ENCODE measurements at regions of chr6 and their contacts with region 1.

Region 1: DNA sequence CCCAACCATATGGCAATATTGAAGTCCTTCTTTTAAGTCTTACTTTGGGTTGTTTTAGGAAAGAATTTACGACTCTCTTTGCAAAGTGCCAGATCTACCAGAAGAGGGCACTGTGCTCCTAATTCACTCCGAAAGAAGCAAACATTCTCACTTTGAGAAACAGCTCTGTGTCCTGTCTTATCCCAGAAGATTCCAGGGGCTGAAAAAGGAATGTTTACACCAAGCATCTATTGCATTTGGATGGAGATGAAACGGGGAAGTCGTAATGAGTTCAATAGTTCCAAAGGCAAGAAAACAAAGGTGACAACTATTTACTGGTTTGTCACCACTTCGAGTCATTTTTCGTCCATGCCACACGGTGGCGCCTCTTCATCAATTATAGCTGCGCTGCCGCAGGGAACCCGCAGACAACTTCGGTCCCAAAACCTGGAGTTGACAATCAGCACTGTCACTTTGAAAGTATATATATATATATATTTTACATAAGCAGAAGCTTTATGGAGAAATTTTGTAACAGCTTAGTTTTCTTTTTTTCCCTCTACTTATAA is 121.6 kb downstream of the MOXD1 start:
- DNase-seq: peak; percentile 80

Region 2: GRCh38 chr6:132289756-132290155 is 10.1 kb after region 1 on chr6:
- CTCF ChIA-PET with region 1: interaction called, 39 read pairs
- POLR2A ChIA-PET with region 1: no interaction called
- DNase-seq: no peak

Region 3: DNA sequence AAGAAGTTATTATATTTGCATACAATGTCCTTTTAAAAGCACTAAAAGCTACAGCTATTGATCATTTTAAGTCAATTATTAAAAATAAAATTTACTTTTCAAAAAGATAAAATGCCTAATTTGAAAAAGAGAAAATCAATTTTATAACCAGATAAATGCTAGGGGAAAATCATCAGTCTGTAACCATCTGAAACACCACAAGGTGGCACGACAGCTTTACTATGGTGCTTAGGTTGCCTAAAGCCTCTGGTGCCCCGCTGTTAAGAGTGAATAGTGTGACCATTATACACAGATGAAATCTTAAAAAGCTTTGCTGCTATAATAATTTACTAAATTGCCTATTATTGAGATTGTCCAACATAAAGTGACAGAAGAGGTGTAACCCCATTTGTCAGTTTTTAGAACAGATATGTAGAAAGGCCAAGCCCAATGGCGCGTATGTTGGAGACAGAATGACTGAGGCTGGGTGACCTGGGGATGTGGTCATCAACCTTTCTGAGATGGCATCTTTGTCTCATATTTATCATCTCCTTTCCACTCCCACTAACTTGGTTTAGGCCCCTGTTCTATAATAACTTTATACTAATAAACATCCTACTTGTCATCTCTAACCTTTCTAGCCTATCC is 20.8 kb after region 1 on chr6:
- CTCF ChIA-PET with region 1: interaction called, 25 read pairs
- POLR2A ChIA-PET with region 1: interaction called, 3 read pairs
- DNase-seq: peak; percentile 60

Region 4: GRCh38 chr6:132471788-132472187 is 192.1 kb after region 1 on chr6:
- CTCF ChIA-PET with region 1: interaction called, 14 read pairs
- POLR2A ChIA-PET with region 1: no interaction called
- DNase-seq: no peak

Region 5: GRCh38 chr6:132483779-132484679 is 204.4 kb after region 1 on chr6:
- CTCF ChIA-PET with region 1: interaction called, 49 read pairs
- POLR2A ChIA-PET with region 1: no interaction called
- DNase-seq: peak; percentile 70